Dorsolateral prefrontal cortex (tissue), 120 donors: ENCODE measurements at regions of chr17 and their contacts with region 1.

Region 1: DNA sequence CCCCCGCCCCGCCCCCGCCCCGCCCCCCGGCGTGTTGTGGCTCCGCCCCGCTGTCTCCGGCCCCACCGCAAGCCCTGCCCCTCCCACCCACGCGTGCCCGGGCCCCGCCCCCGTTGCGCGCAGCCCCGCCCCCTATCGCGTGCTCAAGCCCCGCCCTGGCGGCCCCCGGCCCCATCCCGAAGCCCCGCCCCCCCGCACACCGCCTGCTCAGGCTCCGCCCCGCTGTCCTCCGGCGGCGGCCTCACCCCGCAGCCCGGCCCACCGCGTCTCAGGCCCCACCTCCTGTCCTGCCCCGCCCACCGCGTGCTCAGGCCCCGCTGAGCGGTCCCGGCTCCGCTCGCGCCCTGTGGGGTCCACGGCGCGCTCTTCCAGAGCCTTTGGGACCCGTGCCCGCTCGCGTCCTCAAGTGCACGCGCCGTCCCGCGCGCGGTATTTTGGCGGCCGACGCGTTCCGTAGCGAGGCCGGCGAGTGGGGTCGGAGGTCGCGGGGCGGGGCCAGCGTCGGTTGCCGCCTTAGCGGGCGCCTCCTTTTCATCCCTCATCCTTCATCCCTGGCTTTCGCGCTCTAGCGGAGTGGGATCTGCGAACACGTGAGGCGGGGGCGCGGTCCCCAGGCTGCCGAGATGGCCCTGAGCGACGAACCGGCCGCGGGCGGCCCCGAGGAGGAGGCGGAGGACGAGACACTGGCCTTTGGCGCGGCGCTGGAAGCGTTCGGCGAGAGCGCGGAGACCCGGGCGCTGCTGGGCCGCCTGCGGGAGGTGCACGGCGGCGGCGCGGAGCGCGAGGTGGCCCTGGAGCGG is at the start of gene TBCD:
- DNase-seq: peak; percentile 65 to 90 (median 82)
- H3K4me3 ChIP-seq: peak within 1 kb of the TSS; percentile 62 to 96 (median 85)
- H3K27ac ChIP-seq: peak within 1 kb of the TSS in 55 of 59 donors; percentile 37 to 93 (median 79)
- H3K27me3 ChIP-seq: no peaks in the 10 kb centered on the region
- CTCF ChIP-seq: peak in 13 of 56 donors; percentile 6 to 38 (median 17)
- total RNA-seq, gene TBCD: 90.4 to 151 (median 117) TPM

Region 2: DNA sequence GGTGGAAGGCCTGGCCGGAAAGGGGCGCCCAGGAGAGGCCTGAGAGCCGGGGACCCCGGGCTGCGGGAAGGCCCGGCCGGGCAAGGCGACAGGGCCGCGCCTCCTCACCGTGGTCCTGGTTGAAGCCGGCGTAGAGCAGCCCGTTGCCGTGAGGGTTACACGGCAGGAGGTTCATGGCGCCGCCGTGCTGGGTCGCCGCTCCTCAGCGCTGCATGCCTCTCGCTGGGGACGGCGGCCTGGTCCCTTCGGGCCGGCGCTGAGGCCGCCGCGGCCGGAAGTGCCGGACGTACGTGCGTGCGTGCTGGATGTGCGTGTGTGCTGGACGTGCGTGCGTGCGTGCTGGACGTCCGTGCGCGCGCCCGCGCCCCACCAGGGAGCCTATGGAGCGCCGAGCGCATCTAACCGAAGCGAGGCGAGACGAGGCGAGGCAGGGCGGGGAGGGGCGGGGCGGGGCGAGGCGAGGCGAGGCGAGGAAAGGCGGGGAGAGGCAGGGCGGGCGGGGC is 103.6 kb before region 1 on chr17 and contains the start of gene WDR45B:
- intact Hi-C with region 1: loop called (anchors 5 kb)
- DNase-seq: peak; percentile 88 to 98 (median 95)
- H3K4me3 ChIP-seq: peak within 1 kb of the TSS; percentile 62 to 100 (median 97)
- H3K27ac ChIP-seq: peak within 1 kb of the TSS; percentile 55 to 99 (median 94)
- H3K27me3 ChIP-seq: no peaks in the 10 kb centered on the region
- CTCF ChIP-seq: peak in 2 of 56 donors; percentile 10 to 13
- total RNA-seq, gene WDR45B: 61.0 to 110 (median 83.4) TPM

Region 3: DNA sequence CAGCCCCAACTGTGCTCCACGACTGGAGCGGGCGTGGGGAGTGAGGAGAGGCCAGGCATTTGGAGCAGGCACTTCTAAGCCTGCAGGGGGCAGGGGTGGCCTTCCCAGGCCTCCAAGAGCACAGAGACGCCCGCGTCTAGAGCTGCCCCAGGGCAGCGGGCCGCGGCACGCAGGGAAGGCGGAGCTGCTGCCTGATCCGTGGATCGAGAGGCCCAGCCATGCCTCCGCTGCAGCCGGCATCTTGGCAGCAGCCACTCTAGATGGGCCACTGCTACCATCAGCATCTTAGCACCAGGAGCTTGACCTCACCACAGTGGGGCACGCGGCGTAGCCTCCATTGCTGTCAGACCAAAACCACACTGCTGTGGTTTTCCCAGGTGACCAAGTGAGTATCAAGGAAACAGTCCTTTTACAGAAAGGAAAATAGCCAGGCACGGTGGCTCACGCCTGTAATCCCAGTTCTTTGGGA is 83.1 kb before region 1 on chr17:
- intact Hi-C with region 1: loop called in 1 of 2 experiments (anchors 5 kb)
- DNase-seq: peak; percentile 50 to 85 (median 74)
- H3K4me3 ChIP-seq: peak overlapping the region in 43 of 59 donors; percentile 2 to 51 (median 27)
- H3K27ac ChIP-seq: peak overlapping the region; percentile 20 to 93 (median 82)
- H3K27me3 ChIP-seq: no peaks in the 10 kb centered on the region
- CTCF ChIP-seq: peak in 54 of 56 donors; percentile 43 to 89 (median 72)

Region 4: GRCh38 chr17:82690771-82691489 is 60.8 kb before region 1 on chr17:
- intact Hi-C with region 1: loop called in 1 of 2 experiments (anchors 1 kb)
- DNase-seq: peak in 2 of 10 donors; percentile 76 to 80
- H3K4me3 ChIP-seq: peak overlapping the region in 25 of 59 donors; percentile 3 to 35 (median 21)
- H3K27ac ChIP-seq: peak overlapping the region; percentile 77 to 98 (median 94)
- H3K27me3 ChIP-seq: no peaks in the 10 kb centered on the region
- CTCF ChIP-seq: peak in 1 of 56 donors; percentile 10

Region 5: GRCh38 chr17:82716203-82717010 is 35.4 kb before region 1 on chr17 and contains the start of gene FN3KRP:
- intact Hi-C with region 1: loop called (anchors 5 kb)
- DNase-seq: peak; percentile 78 to 95 (median 91)
- H3K4me3 ChIP-seq: peak within 1 kb of the TSS; percentile 69 to 98 (median 92)
- H3K27ac ChIP-seq: peak within 1 kb of the TSS in 47 of 59 donors; percentile 17 to 89 (median 72)
- H3K27me3 ChIP-seq: no peaks in the 10 kb centered on the region
- CTCF ChIP-seq: peak in 6 of 56 donors; percentile 7 to 19 (median 14)
- total RNA-seq, gene FN3KRP: 32.3 to 70.7 (median 49.0) TPM

Region 6: GRCh38 chr17:82734987-82735866 is 16.5 kb before region 1 on chr17 and contains the start of gene FN3K:
- intact Hi-C with region 1: loop called in 1 of 2 experiments (anchors 2 kb)
- DNase-seq: peak; percentile 56 to 82 (median 73)
- H3K4me3 ChIP-seq: peak within 1 kb of the TSS; percentile 65 to 90 (median 83)
- H3K27ac ChIP-seq: peak within 1 kb of the TSS; percentile 79 to 99 (median 96)
- H3K27me3 ChIP-seq: no peaks in the 10 kb centered on the region
- CTCF ChIP-seq: peak in 4 of 56 donors; percentile 15 to 30 (median 16)
- total RNA-seq, gene FN3K: 62.5 to 210 (median 123) TPM